ENCODE measurements at regions of chr12 and their contacts with region 1.

Region 1: DNA sequence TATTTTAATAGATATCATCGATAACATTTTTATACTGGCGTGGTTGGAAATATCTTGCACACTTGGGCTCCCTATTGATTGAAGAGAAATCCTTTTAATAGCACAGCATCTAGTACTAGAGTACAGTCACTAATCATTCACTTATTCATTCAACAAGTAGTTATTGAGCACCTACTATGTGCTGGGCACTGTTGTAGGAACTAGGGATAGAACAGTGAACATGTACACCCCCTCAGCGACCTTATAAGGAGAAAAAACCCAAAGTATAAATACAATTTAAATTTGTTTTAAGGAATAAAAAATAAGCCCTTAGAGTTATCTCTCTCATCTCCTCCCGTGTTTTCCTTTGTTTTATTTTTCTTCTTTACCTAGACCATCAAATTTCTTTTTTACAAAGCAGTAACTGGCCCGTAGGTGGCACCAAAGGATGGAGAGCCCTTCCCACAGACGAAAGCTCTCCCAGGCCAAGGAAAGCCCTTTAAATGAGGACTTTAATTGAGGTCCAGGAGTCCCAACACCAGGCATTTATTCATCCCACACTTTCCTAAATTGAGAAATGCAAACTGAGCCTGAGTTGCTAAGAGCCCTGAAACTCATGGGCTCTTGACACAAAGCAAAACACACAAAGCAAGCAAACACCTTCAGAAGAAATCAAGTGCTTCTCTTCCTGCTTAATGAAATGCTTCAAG is 29.0 kb downstream of the PEBP1 start:
- DNase-seq: peak; percentile 38
- H3K4me3 Mint-ChIP-seq: no peak overlapping the region
- H3K27ac Mint-ChIP-seq: no peak overlapping the region
- H3K4me1 Mint-ChIP-seq: peaks cover 27% of the 10 kb centered on the region
- H3K27me3 Mint-ChIP-seq: no peaks in the 10 kb centered on the region

Region 2: GRCh38 chr12:118120579-118121363 is 44.2 kb before region 1 on chr12:
- CTCF ChIA-PET with region 1: interaction called, 6 read pairs
- intact Hi-C with region 1: loop called (anchors 5 kb)
- DNase-seq: peak; percentile 80
- H3K4me3 Mint-ChIP-seq: no peak overlapping the region
- H3K27ac Mint-ChIP-seq: no peak overlapping the region
- H3K4me1 Mint-ChIP-seq: peaks cover 5% of the 10 kb centered on the region
- H3K27me3 Mint-ChIP-seq: no peaks in the 10 kb centered on the region

Region 3: GRCh38 chr12:118183705-118184104 is 18.8 kb after region 1 on chr12:
- CTCF ChIA-PET with region 1: interaction called, 14 read pairs
- intact Hi-C with region 1: no loop called
- DNase-seq: no peak
- H3K4me3 Mint-ChIP-seq: no peak overlapping the region
- H3K27ac Mint-ChIP-seq: no peak overlapping the region
- H3K4me1 Mint-ChIP-seq: peaks cover 18% of the 10 kb centered on the region
- H3K27me3 Mint-ChIP-seq: no peaks in the 10 kb centered on the region

Region 4: DNA sequence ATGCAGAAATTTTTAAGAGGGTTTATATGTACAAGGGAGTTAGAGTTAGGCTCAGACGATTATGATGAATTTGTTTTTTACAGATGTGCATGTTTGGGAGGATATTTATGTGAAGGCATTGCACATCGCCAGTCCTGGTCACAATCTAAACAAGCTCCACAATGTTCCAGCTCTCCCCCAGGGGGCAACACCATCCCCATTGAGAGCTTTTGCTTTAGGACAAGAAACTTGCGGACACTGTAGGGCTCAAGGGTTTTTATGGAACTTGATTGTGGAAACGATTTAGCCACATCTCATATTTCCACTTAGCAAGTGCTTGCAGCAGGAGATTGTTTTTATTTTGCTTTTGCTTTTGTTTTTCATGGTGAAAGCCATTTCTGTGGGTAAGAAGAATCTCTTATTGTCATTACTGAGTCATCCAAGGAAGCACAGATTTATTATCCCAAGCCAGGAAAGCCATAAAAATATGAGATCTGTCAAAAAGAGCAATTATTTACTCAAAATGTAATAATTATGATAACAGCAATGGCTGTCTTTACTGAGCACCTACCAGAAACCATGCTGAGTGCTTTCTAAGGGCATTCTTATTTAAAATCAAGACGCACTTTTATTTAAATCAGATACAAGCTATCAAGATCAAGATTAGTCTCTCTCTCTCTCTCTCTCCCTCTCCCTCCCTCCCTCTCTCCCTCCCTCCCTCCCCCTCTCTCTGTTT is 539.7 kb after region 1 on chr12:
- CTCF ChIA-PET with region 1: no interaction called
- intact Hi-C with region 1: no loop called
- DNase-seq: no peak
- H3K4me3 Mint-ChIP-seq: no peak overlapping the region
- H3K27ac Mint-ChIP-seq: no peak overlapping the region
- H3K4me1 Mint-ChIP-seq: no peaks in the 10 kb centered on the region
- H3K27me3 Mint-ChIP-seq: no peaks in the 10 kb centered on the region

Measured in activated naive CD4-positive, alpha-beta T cell treated with anti-CD3 and anti-CD28 coated beads for 36 hours (primary cell).